ENCODE measurements at regions of chr1 and their contacts with region 1.

Region 1: DNA sequence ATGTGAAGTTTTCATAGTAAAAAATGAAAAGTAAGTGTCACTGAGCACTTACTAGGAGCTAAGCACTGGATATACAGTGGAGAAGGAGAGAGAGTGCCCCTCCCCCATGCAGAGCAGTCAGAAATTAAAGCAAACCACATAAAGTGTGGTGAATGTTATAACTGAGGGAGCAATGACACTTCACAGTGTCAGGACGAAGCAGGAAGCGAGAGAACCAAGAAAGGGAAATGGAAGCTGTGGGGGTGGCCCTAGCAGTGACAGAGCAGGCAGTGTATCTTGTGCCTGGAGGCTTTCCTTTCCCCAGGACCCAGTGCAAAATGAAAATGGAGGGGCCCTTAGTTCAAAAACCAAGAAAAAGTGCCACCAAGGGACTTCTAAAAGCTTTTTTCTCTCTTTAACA is 21.5 kb upstream of the RCAN3 start:
- DNase-seq: peak; percentile 89
- H3K4me3 Mint-ChIP-seq: peak overlapping the region; percentile 67
- H3K27ac Mint-ChIP-seq: peak overlapping the region; percentile 99
- H3K4me1 Mint-ChIP-seq: peaks cover 70% of the 10 kb centered on the region
- H3K27me3 Mint-ChIP-seq: no peaks in the 10 kb centered on the region

Region 2: DNA sequence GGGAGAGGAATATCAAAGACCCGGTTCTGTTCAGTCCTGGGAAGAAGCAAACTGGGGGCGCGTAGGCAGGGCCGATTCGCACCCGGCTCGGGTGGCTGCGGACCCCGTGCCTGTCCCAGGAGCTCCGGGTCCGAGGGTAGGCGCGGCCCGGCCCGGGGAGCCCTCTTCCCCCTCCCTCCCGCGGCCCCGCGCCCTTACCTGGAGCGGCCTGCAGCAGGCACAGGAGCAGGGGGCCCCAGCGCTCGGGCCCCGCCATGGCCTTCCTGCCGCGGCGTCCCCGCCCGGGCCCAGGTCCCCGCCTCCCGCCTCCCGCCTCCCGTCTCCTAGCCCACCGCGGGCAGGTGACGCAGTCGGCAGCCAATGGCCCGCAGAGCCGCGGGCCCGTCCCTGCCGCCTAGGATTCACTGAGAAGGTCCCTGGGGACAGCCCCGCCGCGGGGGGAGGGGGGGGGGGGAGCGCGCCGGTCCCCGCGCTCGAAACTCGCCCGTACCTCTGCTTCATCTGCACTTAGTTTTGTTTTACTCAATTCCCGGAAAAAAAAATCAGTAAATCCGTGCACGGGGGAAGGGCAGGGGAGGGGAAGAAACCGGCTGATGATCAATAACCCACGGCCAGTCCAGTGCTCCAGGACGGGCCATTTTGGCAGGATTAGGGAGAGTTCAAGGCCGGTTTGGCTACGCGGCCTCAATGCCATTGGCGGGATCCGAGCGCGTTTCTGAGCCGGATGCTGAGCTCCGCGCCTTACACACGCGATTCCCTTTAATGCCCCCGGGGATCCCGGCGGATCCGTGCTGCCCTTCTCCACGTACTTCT is 293.9 kb before region 1 on chr1 and contains the start of gene IFNLR1:
- CTCF ChIA-PET with region 1: no interaction called
- intact Hi-C with region 1: loop called (anchors 5 kb)
- DNase-seq: peak; percentile 92
- H3K4me3 Mint-ChIP-seq: peak within 1 kb of the TSS; percentile 79
- H3K27ac Mint-ChIP-seq: peak within 1 kb of the TSS; percentile 18
- H3K4me1 Mint-ChIP-seq: peaks cover 50% of the 10 kb centered on the region
- H3K27me3 Mint-ChIP-seq: peaks cover 3% of the 10 kb centered on the region
- total RNA-seq, gene IFNLR1: 4.3 to 4.6 TPM

Region 3: DNA sequence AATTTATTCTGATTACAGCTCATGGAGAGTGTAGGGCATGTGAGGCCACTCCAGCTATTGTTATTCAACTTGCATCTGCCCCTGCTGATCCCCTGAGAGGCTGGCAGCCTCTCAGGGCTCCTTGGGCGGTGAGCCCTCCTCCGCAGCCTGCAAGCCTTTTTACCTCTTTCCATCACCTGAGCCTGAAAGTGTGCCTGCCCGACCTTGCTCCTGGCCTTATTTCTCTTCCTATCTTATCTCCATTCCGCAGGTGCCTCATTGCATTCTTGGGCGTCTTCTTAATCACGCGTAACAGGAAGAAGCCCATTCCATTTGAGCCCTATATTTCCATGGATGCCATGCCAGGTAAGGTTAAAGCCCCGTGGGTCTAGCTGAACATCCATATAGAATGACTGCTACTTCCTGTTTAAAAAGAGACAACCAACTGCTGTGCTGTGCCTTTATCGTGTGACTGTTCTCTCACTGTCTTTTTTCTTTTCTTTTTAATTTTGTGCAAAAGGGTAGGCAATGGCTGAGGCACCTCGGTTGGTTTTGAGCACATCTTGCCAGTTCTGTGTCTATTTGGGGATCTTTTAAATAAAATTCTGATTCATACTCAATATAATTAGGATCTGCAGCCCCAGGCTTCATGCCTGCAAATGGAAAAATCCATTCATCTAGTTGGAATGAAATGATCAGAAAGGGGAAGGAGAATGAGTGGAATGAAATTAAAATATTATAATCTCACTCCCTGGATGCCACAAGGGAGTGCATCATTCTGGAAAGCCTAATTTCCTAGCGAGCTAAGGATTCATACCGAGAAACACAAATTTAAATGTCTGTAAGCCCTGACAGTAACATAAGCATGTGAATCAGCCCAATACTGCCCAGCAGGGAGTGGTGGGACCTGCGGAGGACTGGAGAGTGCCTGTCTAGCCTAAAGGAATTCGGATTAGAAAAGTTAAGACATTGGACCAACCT is 17.0 kb before region 1 on chr1:
- CTCF ChIA-PET with region 1: interaction called, 16 read pairs
- intact Hi-C with region 1: no loop called
- DNase-seq: no peak
- H3K4me3 Mint-ChIP-seq: no peak overlapping the region
- H3K27ac Mint-ChIP-seq: peak overlapping the region; percentile 81
- H3K4me1 Mint-ChIP-seq: peaks cover 36% of the 10 kb centered on the region
- H3K27me3 Mint-ChIP-seq: no peaks in the 10 kb centered on the region

Region 4: DNA sequence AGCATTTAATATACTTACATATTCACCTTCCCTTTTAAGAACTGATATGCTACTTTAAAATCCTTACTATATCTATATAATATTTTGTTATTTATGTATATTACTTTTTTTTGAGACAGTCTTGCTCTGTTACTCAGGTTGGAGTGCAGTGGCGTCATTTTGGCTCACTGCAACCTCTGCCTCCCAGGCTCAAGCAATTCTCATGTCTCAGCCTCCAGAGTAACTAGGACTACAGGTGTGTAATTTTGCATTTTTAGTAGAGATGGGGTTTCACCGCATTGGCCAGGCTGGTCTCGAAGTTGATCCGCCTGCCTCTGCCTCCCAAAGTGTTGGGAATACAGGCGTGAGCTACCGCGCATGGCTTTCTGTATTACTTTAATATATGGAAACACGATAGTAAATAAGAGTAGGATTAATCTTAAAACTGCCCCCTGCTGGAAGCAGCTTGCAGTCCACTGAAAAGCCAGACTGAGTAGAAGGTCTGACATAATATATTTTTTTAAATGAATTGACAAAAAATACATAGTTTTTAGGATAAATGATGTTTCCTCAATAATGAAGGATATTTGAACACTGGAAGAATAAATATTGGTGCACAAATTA is 45.9 kb after region 1 on chr1:
- CTCF ChIA-PET with region 1: interaction called, 10 read pairs
- intact Hi-C with region 1: no loop called
- DNase-seq: peak; percentile 74
- H3K4me3 Mint-ChIP-seq: no peak overlapping the region
- H3K27ac Mint-ChIP-seq: peak overlapping the region; percentile 63
- H3K4me1 Mint-ChIP-seq: peaks cover 70% of the 10 kb centered on the region
- H3K27me3 Mint-ChIP-seq: no peaks in the 10 kb centered on the region

Region 5: DNA sequence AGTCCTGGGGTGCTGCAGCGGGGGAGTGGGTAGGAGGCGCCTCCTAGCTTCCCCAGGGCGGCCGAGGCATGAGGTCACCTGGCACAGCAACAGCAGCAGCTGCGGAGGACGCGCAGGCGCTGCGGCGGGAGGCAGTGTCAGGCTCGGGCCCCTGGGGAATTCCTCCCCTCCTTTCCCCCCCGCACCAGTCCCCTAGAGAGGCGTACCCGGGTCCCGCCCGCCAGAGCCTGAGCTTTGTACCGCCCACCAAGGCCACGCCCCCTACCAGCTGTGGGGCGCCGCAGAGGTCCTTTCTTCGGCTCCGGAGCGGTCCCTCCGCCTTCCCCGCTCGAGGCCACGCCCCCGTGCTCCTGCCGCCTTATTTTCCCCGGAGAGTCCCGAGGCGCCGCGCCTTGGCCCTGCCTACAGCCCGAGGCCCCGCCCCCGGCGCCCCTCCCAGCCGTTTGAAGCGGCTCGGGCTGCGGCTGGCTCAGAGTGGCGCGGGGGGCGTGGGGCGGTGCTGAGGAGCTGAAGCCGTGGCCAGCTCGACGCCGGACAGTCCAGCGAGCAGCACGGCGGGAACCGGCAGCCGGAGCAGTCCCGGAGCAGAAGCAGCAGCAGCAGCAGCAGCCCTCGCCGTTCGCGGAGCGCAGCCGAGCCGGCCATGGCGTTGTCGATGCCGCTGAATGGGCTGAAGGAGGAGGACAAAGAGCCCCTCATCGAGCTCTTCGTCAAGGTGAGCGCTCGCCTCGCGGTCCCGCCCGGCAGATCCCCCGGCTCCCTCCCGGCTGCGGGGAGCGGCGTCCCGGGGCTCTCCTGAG is 264.0 kb after region 1 on chr1 and contains the start of gene CLIC4:
- CTCF ChIA-PET with region 1: no interaction called
- intact Hi-C with region 1: loop called (anchors 5 kb)
- DNase-seq: peak; percentile 100
- H3K4me3 Mint-ChIP-seq: peak within 1 kb of the TSS; percentile 88
- H3K27ac Mint-ChIP-seq: peak within 1 kb of the TSS; percentile 77
- H3K4me1 Mint-ChIP-seq: peaks cover 52% of the 10 kb centered on the region
- H3K27me3 Mint-ChIP-seq: no peaks in the 10 kb centered on the region
- total RNA-seq, gene CLIC4: 38.0 to 44.3 TPM

Measured in activated naive CD4-positive, alpha-beta T cell treated with anti-CD3 and anti-CD28 coated beads for 36 hours (primary cell).